Motor neuron (in vitro differentiated cells): ENCODE measurements at regions of chr10 and their contacts with region 1.

Region 1: GRCh38 chr10:14822879-14823755 is 14.7 kb downstream of the CDNF start:
- ATAC-seq: peak in 4 of 8 experiments; percentile 41 to 63 (median 56)
- H3K4me3 ChIP-seq: no peak overlapping the region
- H3K27ac ChIP-seq: no peak overlapping the region
- H3K4me1 ChIP-seq: no peaks in the 10 kb centered on the region

Region 2: DNA sequence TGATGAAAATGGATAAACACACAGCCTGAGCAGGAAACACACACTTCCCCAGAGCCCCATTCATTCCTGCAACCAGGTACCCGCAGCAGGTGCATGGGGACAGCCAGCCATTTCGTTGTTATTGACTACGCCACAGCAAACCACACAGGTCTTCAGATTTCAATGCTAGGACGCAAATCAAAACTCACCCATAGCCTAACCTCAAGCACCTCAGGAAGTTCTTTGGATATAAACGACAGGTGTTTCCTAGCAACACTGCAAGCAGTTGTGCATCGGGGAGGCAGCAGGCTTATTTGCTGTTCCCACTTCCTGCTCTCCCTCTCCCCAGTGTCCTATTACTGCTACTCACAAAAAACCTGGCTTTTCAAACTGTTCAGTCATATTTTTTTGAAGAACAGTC is 315.9 kb before region 1 on chr10:
- in situ Hi-C with region 1: loop called in 3 of 9 experiments (anchors 25 kb)
- ATAC-seq: no peak
- H3K4me3 ChIP-seq: no peak overlapping the region
- H3K27ac ChIP-seq: no peak overlapping the region
- H3K4me1 ChIP-seq: peaks cover 5% of the 10 kb centered on the region in 2 donors

Region 3: GRCh38 chr10:14536241-14537213 is 286.6 kb before region 1 on chr10:
- in situ Hi-C with region 1: loop called in 3 of 9 experiments (anchors 10 to 25 kb)
- ATAC-seq: peak; percentile 67 to 95 (median 85)
- H3K4me3 ChIP-seq: no peak overlapping the region
- H3K27ac ChIP-seq: no peak overlapping the region
- H3K4me1 ChIP-seq: peaks cover 4 to 12% of the 10 kb centered on the region in 2 donors